Activated naive CD4-positive, alpha-beta T cell treated with anti-CD3 and anti-CD28 coated beads for 36 hours (primary cell): ENCODE measurements at regions of chr17 and their contacts with region 1.

Region 1: GRCh38 chr17:42248351-42249179 is 27.6 kb downstream of the STAT5B start:
- DNase-seq: peak; percentile 92
- H3K4me3 Mint-ChIP-seq: peak overlapping the region; percentile 74
- H3K27ac Mint-ChIP-seq: peak overlapping the region; percentile 97
- H3K4me1 Mint-ChIP-seq: peaks cover 71% of the 10 kb centered on the region
- H3K27me3 Mint-ChIP-seq: no peaks in the 10 kb centered on the region

Region 2: GRCh38 chr17:42221937-42222745 is 26.4 kb before region 1 on chr17:
- CTCF ChIA-PET with region 1: interaction called, 36 read pairs
- intact Hi-C with region 1: loop called (anchors 1 kb)
- DNase-seq: peak; percentile 73
- H3K4me3 Mint-ChIP-seq: no peak overlapping the region
- H3K27ac Mint-ChIP-seq: peak overlapping the region; percentile 6
- H3K4me1 Mint-ChIP-seq: peaks cover 2% of the 10 kb centered on the region
- H3K27me3 Mint-ChIP-seq: no peaks in the 10 kb centered on the region

Region 3: DNA sequence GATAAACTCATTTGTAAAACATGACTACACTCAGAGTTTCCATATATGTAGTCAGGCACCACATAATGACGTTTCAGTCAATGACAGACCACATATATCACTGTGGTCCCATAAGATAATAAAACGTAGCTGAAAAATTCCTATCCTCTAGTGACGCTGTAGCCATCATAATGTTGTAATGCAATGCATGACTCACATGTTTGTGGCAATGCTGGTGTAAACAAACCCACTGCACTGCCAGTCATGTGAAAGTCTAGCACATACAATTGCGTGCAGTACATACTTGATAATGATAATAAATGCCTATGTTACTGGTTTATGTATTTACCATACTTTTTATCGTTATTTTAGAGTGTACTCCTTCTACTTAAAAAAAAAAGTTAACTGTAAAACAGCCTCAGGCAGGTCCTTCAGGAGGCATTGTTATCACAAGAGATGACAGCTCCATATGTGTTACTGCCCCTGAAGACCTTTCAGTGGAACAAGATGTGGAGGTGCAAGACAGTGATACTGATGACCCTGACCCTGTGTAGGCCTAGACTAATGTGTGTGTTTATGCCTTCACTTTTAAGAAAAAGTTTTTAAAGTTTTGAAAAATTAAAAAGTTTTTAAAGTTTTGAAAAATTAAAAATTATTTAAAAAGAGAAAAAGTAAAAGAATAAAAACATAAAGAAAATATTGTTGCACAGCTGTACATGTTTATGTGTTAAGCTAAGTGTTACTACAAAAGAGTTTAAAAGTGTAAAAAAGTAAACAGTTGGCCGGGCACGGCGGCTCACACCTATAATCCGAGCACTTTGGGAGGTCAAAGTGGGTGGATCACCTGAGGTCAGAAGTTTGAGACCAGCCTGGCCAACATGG is 18.6 kb after region 1 on chr17:
- CTCF ChIA-PET with region 1: interaction called, 46 read pairs
- intact Hi-C with region 1: loop called (anchors 1 kb)
- DNase-seq: peak; percentile 70
- H3K4me3 Mint-ChIP-seq: peak overlapping the region; percentile 38
- H3K27ac Mint-ChIP-seq: peak overlapping the region; percentile 97
- H3K4me1 Mint-ChIP-seq: peaks cover 68% of the 10 kb centered on the region
- H3K27me3 Mint-ChIP-seq: no peaks in the 10 kb centered on the region

Region 4: GRCh38 chr17:42276359-42276608 is 27.7 kb after region 1 on chr17 and contains the start of gene STAT5B:
- CTCF ChIA-PET with region 1: interaction called, 46 read pairs
- intact Hi-C with region 1: loop called (anchors 1 kb)
- DNase-seq: peak; percentile 62
- H3K4me3 Mint-ChIP-seq: peak within 1 kb of the TSS; percentile 96
- H3K27ac Mint-ChIP-seq: peak within 1 kb of the TSS; percentile 97
- H3K4me1 Mint-ChIP-seq: peaks cover 35% of the 10 kb centered on the region
- H3K27me3 Mint-ChIP-seq: no peaks in the 10 kb centered on the region
- total RNA-seq, gene STAT5B: 185 to 192 TPM

Region 5: GRCh38 chr17:42287926-42288802 is 39.6 kb after region 1 on chr17 and contains the start of gene STAT5A:
- CTCF ChIA-PET with region 1: interaction called, 4 read pairs
- intact Hi-C with region 1: loop called (anchors 1 kb)
- DNase-seq: peak; percentile 88
- H3K4me3 Mint-ChIP-seq: peak within 1 kb of the TSS; percentile 86
- H3K27ac Mint-ChIP-seq: peak within 1 kb of the TSS; percentile 95
- H3K4me1 Mint-ChIP-seq: peaks cover 68% of the 10 kb centered on the region
- H3K27me3 Mint-ChIP-seq: no peaks in the 10 kb centered on the region
- total RNA-seq, gene STAT5A: 165 to 174 TPM

Region 6: DNA sequence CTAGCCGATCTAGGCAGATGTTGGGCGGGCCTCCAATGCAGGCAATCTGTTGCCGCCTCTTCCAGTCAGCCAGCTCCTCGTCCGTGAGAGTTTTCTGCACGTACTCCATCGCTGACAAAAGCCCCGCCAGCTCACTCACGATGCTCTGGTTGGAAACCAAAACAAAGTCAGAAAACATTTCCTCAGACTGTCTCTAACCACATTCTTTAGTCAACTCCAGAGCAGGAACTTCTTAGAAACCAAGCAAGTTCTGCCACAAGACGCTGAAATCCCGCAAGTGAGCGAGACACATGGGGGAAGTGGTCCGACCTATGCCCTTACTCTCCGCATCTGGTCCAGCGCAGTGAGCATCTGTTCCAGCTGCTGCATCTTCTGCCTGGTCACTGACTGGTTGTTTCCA is 88.9 kb after region 1 on chr17:
- CTCF ChIA-PET with region 1: no interaction called
- intact Hi-C with region 1: loop called (anchors 1 kb)
- DNase-seq: peak; percentile 92
- H3K4me3 Mint-ChIP-seq: peak overlapping the region; percentile 43
- H3K27ac Mint-ChIP-seq: peak overlapping the region; percentile 90
- H3K4me1 Mint-ChIP-seq: peaks cover 84% of the 10 kb centered on the region
- H3K27me3 Mint-ChIP-seq: no peaks in the 10 kb centered on the region

Region 7: DNA sequence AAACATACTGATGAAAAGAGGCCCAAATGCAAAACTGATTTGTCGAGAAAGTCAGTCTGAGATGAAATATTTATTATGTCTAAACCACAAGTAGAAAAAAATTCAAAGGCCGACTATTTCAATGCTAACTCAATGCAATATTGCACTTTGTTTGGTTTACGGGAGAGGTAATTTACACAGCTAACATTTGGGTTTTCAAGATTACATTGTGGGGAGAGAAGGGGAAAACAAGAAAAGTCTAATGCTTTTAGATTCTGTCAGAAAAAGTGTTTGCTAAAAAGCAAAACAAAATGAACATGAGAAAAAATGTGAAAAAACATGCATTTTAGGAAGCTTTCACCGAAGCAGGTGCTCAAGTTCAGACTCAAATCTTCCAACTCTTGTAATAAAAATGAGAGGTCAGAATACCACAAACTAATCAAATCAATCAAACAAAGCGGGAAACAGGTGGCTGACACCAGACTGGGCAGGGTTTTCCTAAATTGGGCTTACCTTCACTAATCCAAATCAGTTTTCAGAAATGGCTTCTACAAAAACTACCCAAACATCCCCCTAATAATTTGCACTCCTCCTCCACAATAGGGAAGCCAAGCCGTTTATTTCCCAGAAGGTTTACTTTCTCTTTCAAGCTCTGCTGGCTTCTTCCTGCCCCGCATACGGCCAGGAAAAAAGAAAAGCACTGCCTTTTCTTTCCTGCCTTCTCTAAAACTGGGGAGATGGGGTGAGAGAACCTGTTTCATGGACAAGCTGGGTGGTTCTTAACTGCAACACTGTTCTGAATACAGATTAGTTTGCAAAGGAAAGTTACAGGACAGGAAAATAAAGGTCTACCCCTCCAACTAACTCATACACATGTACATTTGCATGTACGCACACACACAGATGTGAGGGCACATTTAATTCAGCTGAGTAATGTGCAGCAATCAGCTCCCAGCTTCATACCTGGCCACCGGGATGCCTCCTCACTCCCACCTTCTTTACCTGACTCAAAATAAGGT is 130.3 kb after region 1 on chr17:
- CTCF ChIA-PET with region 1: no interaction called
- intact Hi-C with region 1: loop called (anchors 2 kb)
- DNase-seq: peak; percentile 73
- H3K4me3 Mint-ChIP-seq: peak overlapping the region; percentile 63
- H3K27ac Mint-ChIP-seq: peak overlapping the region; percentile 95
- H3K4me1 Mint-ChIP-seq: peaks cover 90% of the 10 kb centered on the region
- H3K27me3 Mint-ChIP-seq: no peaks in the 10 kb centered on the region